ENCODE measurements at regions of chr6 and their contacts with region 1.

Region 1: DNA sequence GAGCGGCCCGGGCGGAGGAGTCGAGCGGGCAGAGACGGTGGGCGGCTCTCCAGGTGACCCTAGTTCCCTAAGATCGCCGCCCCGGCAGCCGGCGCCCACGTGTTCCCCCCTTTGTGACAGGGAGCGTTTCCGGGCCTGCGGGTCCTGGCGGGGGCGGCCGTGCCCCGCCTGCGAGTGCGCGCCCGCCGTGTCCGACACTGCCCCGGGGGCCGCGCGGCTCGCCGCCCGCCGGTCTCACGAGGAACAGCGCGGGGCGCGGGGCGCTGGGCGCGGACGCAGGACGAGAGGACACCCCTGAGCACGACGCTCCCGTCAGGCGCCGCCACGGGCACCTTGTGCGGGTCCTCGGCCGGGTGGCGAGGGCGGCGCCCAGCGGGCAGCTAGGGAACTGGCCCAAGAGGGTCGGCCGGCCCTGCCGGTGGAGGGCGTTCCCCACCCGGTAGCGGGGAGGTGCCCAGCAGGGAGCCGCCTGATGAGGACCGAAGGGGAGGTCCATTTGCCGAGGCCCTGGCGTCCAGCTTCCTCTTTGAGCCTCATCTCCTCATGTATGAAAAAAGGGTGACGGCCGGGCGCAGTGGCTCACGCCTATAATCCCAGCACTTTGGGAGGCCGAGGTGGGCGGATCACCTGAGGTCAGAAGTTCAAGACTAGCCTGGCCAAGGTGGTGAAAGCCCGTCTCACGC is at the start of gene VARS1:
- DNase-seq: peak; percentile 96

Region 2: GRCh38 chr6:31769684-31770371 is 25.9 kb before region 1 on chr6:
- CTCF ChIA-PET with region 1: interaction called, 11 read pairs
- POLR2A ChIA-PET with region 1: no interaction called
- DNase-seq: peak; percentile 95

Region 3: DNA sequence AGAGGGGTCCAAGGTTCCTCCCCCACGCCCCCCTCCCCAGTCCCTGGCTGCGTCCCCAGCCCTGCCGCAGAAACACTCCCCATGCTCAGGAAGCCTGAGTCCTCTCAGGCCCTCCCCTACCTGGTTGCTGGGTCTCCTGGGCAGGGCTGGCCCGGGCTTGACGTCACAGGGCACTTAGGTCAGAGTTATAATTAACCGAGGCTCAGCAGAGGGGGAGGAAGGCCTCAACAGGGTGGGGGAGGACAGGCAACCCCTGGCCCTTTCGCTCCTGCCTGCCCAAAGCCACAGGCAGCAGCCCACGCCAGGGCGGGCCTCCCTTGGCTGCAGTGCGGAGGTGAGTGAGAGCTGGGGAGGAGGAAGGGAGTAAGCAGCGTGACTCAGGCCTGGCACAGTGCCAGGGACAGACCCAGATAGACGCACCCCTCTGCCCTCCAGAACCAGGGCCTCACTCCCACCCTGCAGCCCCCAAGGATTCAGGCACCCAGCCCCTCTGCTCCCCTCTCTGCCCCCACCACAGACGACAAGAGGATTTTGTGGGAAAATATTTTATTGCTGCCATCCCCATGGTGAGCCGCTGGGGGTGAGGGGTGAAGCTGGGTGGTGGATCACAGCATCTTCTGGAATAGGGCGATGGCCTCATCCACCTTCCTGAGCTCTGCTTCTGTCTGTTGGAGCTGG is 18.6 kb before region 1 on chr6 and contains the start of gene VWA7:
- CTCF ChIA-PET with region 1: interaction called, 12 read pairs
- POLR2A ChIA-PET with region 1: interaction called, 3 read pairs
- DNase-seq: peak; percentile 65

Region 4: GRCh38 chr6:31806465-31807272 is 10.9 kb after region 1 on chr6 and contains the start of gene LSM2:
- CTCF ChIA-PET with region 1: interaction called, 15 read pairs
- POLR2A ChIA-PET with region 1: interaction called, 77 read pairs
- DNase-seq: peak; percentile 100

Region 5: GRCh38 chr6:31815025-31815838 is 19.5 kb after region 1 on chr6 and contains the starts of genes HSPA1A and HSPA1L:
- CTCF ChIA-PET with region 1: interaction called, 5 read pairs
- POLR2A ChIA-PET with region 1: interaction called, 16 read pairs
- DNase-seq: no peak

Region 6: DNA sequence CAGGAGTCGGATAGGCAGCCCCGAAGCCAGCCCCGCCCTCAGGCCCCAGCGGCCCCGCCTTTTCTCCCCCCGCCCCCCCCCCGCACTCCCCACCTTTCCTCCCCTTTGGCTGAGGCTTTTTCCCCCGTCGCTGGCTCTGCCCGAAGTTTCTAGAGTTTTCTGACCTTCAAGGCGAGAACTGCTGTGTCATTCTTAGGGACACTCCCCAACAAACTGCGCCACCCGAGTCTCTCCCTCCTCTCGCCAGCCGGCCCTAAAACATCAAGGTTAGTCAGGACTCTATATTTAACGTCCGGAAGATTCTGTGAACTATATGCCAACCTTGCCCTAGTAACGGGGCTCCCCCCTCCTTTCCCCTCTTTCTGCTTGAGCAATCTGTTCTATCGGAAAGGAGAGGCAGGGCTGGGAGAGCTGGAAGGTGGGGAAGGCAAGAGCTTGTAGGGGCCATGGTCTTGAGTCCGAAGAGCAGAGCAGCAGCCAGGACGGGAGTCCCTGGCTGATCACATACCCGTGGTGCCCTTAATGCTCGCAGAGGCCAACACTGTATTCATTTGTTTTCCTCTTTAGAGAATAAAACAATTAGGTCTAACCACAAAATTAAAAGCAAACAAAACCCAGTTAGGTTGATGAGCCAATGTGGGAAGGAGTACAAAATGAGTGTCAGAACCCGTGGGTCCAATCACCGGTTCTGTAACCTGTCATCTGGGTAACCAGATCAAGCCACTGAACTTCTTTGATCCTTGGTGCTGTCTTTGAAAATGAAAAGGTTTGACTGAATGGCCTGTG is 26.5 kb after region 1 on chr6:
- CTCF ChIA-PET with region 1: interaction called, 4 read pairs
- POLR2A ChIA-PET with region 1: interaction called, 22 read pairs
- DNase-seq: peak; percentile 50

Region 7: GRCh38 chr6:31933537-31933936 is 137.8 kb after region 1 on chr6:
- CTCF ChIA-PET with region 1: no interaction called
- POLR2A ChIA-PET with region 1: no interaction called
- DNase-seq: no peak

Measured in HEK293T (cell line).